Posterior cingulate gyrus (tissue), 11 donors: ENCODE measurements at regions of chr11 and their contacts with region 1.

Region 1: GRCh38 chr11:128884703-128885338 is 6.3 kb upstream of the KCNJ5 start:
- DNase-seq: peak in 7 of 10 donors; percentile 51 to 93 (median 62)

Region 2: GRCh38 chr11:128412847-128413791 is 471.7 kb before region 1 on chr11:
- intact Hi-C with region 1: no loop called
- DNase-seq: no peak

Region 3: GRCh38 chr11:128936606-128937251 is 51.9 kb after region 1 on chr11:
- intact Hi-C with region 1: no loop called
- DNase-seq: peak in 1 of 10 donors; percentile 75

Region 4: GRCh38 chr11:128956401-128957201 is 71.8 kb after region 1 on chr11:
- intact Hi-C with region 1: loop called (anchors 1 kb)
- DNase-seq: no peak